Dendritic cell treated with granulocyte-macrophage colony-stimulating factor and Interleukin-4, amounts not matched to agents 40 ng/mL and 50 ng/mL, for 4 days (primary cell): ENCODE measurements at regions of chr2 and their contacts with region 1.

Region 1: GRCh38 chr2:86464652-86465051 is 23.5 kb downstream of the KDM3A start:
- H3K4me3 Mint-ChIP-seq: no peak overlapping the region
- H3K27ac Mint-ChIP-seq: no peak overlapping the region
- H3K4me1 Mint-ChIP-seq: peaks cover 28% of the 10 kb centered on the region
- H3K27me3 Mint-ChIP-seq: no peaks in the 10 kb centered on the region

Region 2: DNA sequence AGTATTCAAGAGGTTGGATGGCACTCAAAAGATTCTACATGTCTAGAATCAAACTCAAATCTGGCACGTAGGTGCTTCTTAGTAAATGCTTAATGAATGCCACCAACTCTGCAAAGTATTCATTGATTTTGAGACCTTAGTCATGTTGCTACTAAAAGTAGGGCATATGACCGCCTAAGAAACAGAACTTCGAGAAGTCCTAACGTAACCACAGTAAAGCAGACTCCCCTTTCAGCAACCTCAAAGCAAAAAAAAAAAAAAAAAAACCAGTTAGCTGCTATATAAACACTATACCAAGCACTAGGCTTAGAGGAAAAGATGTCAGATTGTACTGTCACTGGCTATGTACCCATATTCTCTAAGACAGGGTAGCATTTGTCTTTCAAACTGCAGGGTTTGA is 324.7 kb before region 1 on chr2:
- intact Hi-C with region 1: loop called (anchors 10 kb)
- H3K4me3 Mint-ChIP-seq: no peak overlapping the region
- H3K27ac Mint-ChIP-seq: no peak overlapping the region
- H3K4me1 Mint-ChIP-seq: peaks cover 26% of the 10 kb centered on the region
- H3K27me3 Mint-ChIP-seq: no peaks in the 10 kb centered on the region

Region 3: DNA sequence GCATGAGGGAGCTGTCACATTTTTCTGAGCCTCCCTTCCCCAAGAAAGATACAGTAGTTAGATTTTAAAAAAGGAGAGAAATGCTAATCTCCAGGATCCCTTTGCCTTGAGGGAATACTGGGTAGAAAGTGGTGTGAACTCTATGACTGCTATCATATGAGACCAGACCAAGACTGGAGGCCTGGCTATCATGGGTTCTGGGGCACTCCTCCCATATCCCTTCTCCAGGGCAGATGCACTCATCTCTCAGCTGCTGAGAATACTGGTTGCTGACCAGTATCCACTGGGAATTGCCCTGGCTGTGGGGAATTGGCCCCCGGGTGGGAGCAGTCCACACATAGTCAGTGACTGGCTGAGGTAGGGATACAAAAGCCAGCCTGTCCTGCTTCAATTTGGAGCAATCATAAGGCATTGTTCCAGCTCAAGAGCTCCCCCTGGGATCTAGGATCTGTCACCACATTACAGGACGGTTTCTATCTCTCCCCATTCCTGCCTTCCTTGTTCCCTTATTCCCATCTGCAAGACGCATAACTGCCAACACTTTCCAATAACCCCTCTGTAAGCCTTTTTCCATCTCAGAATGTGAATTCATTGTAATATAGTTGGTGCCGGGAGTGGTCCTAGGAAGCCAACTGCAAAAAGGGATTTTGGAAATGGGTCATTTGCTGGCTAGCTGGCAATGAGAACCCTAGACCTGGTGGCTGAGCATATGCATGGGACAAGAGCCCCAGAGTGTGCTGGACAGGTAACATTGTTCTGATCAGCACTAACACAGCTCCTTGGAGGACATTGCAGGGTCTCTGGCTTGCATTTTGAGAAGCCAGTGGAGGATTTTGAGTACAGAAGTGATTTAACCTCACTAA is 91.8 kb before region 1 on chr2:
- intact Hi-C with region 1: no loop called
- H3K4me3 Mint-ChIP-seq: no peak overlapping the region
- H3K27ac Mint-ChIP-seq: no peak overlapping the region
- H3K4me1 Mint-ChIP-seq: peaks cover 18% of the 10 kb centered on the region
- H3K27me3 Mint-ChIP-seq: peaks cover 10% of the 10 kb centered on the region

Region 4: GRCh38 chr2:86498468-86499250 is 34.0 kb after region 1 on chr2:
- intact Hi-C with region 1: loop called (anchors 5 kb)
- H3K4me3 Mint-ChIP-seq: no peak overlapping the region
- H3K27ac Mint-ChIP-seq: no peak overlapping the region
- H3K4me1 Mint-ChIP-seq: peaks cover 8% of the 10 kb centered on the region
- H3K27me3 Mint-ChIP-seq: no peaks in the 10 kb centered on the region